HCT116 (cell line): ENCODE measurements at regions of chr2 and their contacts with region 1.

Region 1: GRCh38 chr2:158723917-158724690 is 71.0 kb upstream of the DAPL1 start:
- DNase-seq: peak; percentile 35
- ATAC-seq: peak; percentile 93
- H3K4me3 ChIP-seq: peak overlapping the region in 1 of 2 experiments; percentile 34; a peak in 3 of 4 replicates
- H3K27ac ChIP-seq: no peak overlapping the region; the same call in 1 of the 2 replicates
- H3K4me1 ChIP-seq: peaks cover 10 to 20% of the 10 kb centered on the region in 2 experiments
- H3K27me3 ChIP-seq: no peaks in the 10 kb centered on the region
- CTCF ChIP-seq: peak; percentile 34 to 82 (median 77); a peak in 5 of 6 replicates
- POLR2A ChIP-seq: no peak
- RAD21 ChIP-seq: peak; percentile 34; the same call in 1 of the 2 replicates

Region 2: GRCh38 chr2:158337018-158337417 is 387.1 kb before region 1 on chr2:
- CTCF ChIA-PET with region 1: no interaction called
- POLR2A ChIA-PET with region 1: no interaction called
- RAD21 ChIA-PET with region 1: no interaction called
- intact Hi-C with region 1: no loop called
- DNase-seq: no peak
- ATAC-seq: no peak
- H3K4me3 ChIP-seq: no peak overlapping the region
- H3K27ac ChIP-seq: no peak overlapping the region
- H3K4me1 ChIP-seq: no peaks in the 10 kb centered on the region
- H3K27me3 ChIP-seq: no peaks in the 10 kb centered on the region
- CTCF ChIP-seq: no peak
- POLR2A ChIP-seq: no peak
- RAD21 ChIP-seq: no peak

Region 3: GRCh38 chr2:158686210-158686691 is 37.9 kb before region 1 on chr2:
- CTCF ChIA-PET with region 1: no interaction called
- POLR2A ChIA-PET with region 1: no interaction called
- RAD21 ChIA-PET with region 1: no interaction called
- intact Hi-C with region 1: no loop called
- DNase-seq: no peak
- ATAC-seq: no peak
- H3K4me3 ChIP-seq: no peak overlapping the region
- H3K27ac ChIP-seq: no peak overlapping the region
- H3K4me1 ChIP-seq: no peaks in the 10 kb centered on the region
- H3K27me3 ChIP-seq: no peaks in the 10 kb centered on the region
- CTCF ChIP-seq: no peak
- POLR2A ChIP-seq: no peak
- RAD21 ChIP-seq: no peak

Region 4: GRCh38 chr2:158713523-158714138 is 10.5 kb before region 1 on chr2:
- CTCF ChIA-PET with region 1: interaction called, 12 read pairs
- POLR2A ChIA-PET with region 1: no interaction called
- RAD21 ChIA-PET with region 1: no interaction called
- intact Hi-C with region 1: no loop called
- DNase-seq: no peak
- ATAC-seq: no peak
- H3K4me3 ChIP-seq: no peak overlapping the region
- H3K27ac ChIP-seq: no peak overlapping the region
- H3K4me1 ChIP-seq: no peaks in the 10 kb centered on the region
- H3K27me3 ChIP-seq: no peaks in the 10 kb centered on the region
- CTCF ChIP-seq: no peak
- POLR2A ChIP-seq: no peak
- RAD21 ChIP-seq: no peak

Region 5: GRCh38 chr2:158926478-158926948 is 202.4 kb after region 1 on chr2:
- CTCF ChIA-PET with region 1: no interaction called
- POLR2A ChIA-PET with region 1: no interaction called
- RAD21 ChIA-PET with region 1: no interaction called
- intact Hi-C with region 1: no loop called
- DNase-seq: peak; percentile 34
- ATAC-seq: peak; percentile 85
- H3K4me3 ChIP-seq: peak overlapping the region in 1 of 2 experiments; percentile 24; a peak in 2 of 4 replicates
- H3K27ac ChIP-seq: no peak overlapping the region
- H3K4me1 ChIP-seq: peaks cover 13 to 34% of the 10 kb centered on the region in 2 experiments; a peak in 3 of 4 replicates
- H3K27me3 ChIP-seq: no peaks in the 10 kb centered on the region
- CTCF ChIP-seq: no peak
- POLR2A ChIP-seq: no peak
- RAD21 ChIP-seq: no peak